ENCODE measurements at regions of chr9 and their contacts with region 1.

Region 1: GRCh38 chr9:124964604-124965003 is 23.7 kb upstream of the GOLGA1 start:
- DNase-seq: no peak
- H3K4me3 ChIP-seq: no peak overlapping the region
- H3K27ac ChIP-seq: no peak overlapping the region
- H3K4me1 ChIP-seq: no peaks in the 10 kb centered on the region
- H3K27me3 ChIP-seq: no peaks in the 10 kb centered on the region
- CTCF ChIP-seq: no peak

Region 2: GRCh38 chr9:124932333-124932732 is 32.3 kb before region 1 on chr9:
- CTCF ChIA-PET with region 1: no interaction called
- POLR2A ChIA-PET with region 1: interaction called, 13 read pairs
- intact Hi-C with region 1: no loop called
- DNase-seq: no peak
- H3K4me3 ChIP-seq: no peak overlapping the region
- H3K27ac ChIP-seq: no peak overlapping the region
- H3K4me1 ChIP-seq: no peaks in the 10 kb centered on the region
- H3K27me3 ChIP-seq: no peaks in the 10 kb centered on the region
- CTCF ChIP-seq: no peak

Measured in A673 (cell line).